ENCODE measurements at regions of chr14 and their contacts with region 1.

Region 1: DNA sequence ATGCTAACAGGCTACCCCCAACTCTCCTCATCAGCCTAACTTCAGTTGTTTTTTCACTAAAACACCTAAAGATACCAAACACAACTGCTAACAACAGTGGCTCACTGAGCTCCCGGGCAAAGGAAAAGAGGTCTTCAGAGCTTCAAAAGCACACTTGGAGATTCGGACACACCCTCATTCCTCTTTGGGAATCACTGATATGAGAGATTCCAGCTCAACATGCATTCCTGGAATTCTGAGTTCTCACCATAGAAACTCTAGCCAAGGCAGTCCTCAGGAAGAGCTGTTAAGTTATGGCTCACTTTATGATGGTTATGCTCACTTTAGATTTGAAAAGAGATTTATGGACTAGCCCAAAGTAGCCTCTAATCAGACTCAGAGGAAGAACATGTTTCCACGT is 40.1 kb downstream of the STXBP6 start:
- DNase-seq: no peak
- ATAC-seq: no peak
- H3K4me3 ChIP-seq: no peak overlapping the region
- H3K27ac ChIP-seq: no peak overlapping the region
- H3K4me1 ChIP-seq: no peaks in the 10 kb centered on the region
- H3K27me3 ChIP-seq: no peaks in the 10 kb centered on the region
- CTCF ChIP-seq: no peak

Region 2: DNA sequence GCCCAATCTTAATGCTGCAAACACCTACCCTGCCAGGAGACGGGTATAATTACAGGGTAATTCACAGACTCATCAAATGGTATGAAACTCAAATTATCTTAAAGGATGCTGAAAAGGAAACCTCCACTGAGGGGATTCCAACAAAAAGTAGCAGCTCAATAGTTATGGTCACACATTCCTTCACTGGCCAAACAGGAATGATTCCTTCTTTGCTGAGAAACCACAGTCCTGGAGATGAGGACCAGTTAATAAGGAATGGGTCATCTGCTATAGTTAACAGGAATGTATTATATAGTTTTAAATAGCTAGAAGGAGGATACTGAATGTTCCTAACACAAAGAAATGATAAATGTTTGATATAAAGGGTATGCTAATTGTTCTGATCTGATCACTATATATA is 96.9 kb before region 1 on chr14:
- CTCF ChIA-PET with region 1: no interaction called
- POLR2A ChIA-PET with region 1: interaction called, 31 read pairs
- intact Hi-C with region 1: no loop called
- DNase-seq: no peak
- ATAC-seq: no peak
- H3K4me3 ChIP-seq: no peak overlapping the region
- H3K27ac ChIP-seq: no peak overlapping the region
- H3K4me1 ChIP-seq: no peaks in the 10 kb centered on the region
- H3K27me3 ChIP-seq: no peaks in the 10 kb centered on the region
- CTCF ChIP-seq: no peak

Region 3: DNA sequence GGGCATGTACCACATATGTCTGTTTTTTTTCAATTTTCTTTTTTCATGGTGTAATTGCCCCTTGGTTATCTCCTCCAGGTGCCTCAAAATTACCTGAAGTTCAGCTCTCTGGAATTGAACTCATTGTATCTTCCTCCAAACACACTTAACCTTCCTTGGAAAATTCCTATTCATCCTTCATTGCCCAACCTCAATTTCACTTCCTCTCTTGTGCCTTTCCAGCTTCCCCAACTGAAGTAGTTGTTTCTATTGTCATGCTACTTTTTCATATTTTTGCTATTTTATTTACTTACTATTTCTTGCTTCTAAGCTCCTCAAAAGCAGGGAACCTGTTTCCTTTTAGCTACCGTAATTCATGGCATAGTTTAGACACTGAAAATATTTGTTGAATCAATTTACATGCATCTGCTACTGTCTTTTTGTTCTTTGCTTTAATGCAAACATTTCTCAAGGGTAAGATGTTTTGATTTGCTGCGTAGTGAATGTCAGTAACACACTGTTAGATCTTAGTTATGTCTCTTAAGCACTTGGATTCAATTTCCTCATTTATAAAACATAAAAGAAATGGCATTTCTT is 77.0 kb after region 1 on chr14:
- CTCF ChIA-PET with region 1: no interaction called
- POLR2A ChIA-PET with region 1: no interaction called
- intact Hi-C with region 1: no loop called
- DNase-seq: no peak
- ATAC-seq: no peak
- H3K4me3 ChIP-seq: no peak overlapping the region
- H3K27ac ChIP-seq: no peak overlapping the region
- H3K4me1 ChIP-seq: no peaks in the 10 kb centered on the region
- H3K27me3 ChIP-seq: no peaks in the 10 kb centered on the region
- CTCF ChIP-seq: no peak